HepG2 (cell line): ENCODE measurements at regions of chrX and their contacts with region 1.

Region 1: GRCh38 chrX:120560842-120561633 is at the start of gene CUL4B:
- DNase-seq: peak; percentile 91
- ATAC-seq: peak; percentile 81
- H3K4me3 ChIP-seq: peak within 1 kb of the TSS; percentile 74 to 84 (median 81)
- H3K27ac ChIP-seq: peak within 1 kb of the TSS; percentile 98
- H3K4me1 ChIP-seq: peaks cover 48% of the 10 kb centered on the region
- H3K27me3 ChIP-seq: no peaks in the 10 kb centered on the region
- CTCF ChIP-seq: no peak
- EP300 ChIP-seq: peak in 1 of 2 experiments; percentile 29; a peak in 1 of 4 replicates
- POLR2A ChIP-seq: peak; percentile 45 to 55; a peak in 3 of 4 replicates
- RAD21 ChIP-seq: no peak
- total RNA-seq, gene CUL4B: 28.5 and 50.0 TPM in 2 replicates

Region 2: DNA sequence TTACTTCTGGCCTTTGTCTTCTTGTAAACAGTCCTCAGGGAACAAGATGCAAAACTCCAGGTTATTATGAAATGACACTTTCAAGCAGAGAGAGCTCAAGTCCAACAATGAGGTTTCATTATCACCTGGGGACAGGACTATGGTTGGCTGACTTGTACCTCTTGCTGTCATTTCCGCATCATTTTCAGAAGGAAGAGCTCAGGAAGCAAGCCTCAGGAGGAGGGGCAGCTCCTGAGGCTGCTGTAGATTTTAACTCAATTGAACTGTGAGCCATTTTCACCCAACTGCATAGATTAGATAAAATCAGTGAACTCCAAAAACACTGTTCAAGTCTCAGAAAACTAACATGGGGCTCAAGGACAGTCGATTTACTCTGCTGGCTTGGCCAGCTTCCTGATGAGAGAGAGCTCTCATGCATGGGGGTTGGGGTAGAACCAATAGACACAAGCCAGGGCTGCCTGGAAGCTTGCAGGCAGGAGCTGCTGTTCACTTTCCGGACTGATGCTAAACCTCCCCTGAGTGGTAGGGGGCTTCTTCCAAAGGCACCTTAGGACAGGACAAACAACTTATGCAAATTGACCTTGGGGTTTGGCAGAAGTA is 273.4 kb before region 1 on chrX:
- CTCF ChIA-PET with region 1: no interaction called
- POLR2A ChIA-PET with region 1: no interaction called
- in situ Hi-C with region 1: no loop called
- intact Hi-C with region 1: no loop called
- DNase-seq: peak; percentile 53
- ATAC-seq: peak; percentile 82
- H3K4me3 ChIP-seq: peak overlapping the region in 1 of 3 experiments; percentile 23; a peak in 2 of 6 replicates
- H3K27ac ChIP-seq: peak overlapping the region; percentile 94
- H3K4me1 ChIP-seq: peaks cover 35% of the 10 kb centered on the region
- H3K27me3 ChIP-seq: 0 out of 5 replicates have a peak, but pooled peaks cover 0 to 1% of the 10 kb centered on the region in 2 experiments
- CTCF ChIP-seq: no peak
- EP300 ChIP-seq: no peak; a peak in 1 of 4 replicates
- POLR2A ChIP-seq: no peak
- RAD21 ChIP-seq: no peak

Region 3: GRCh38 chrX:120468825-120469525 is 92.1 kb before region 1 on chrX and contains the start of gene LAMP2:
- CTCF ChIA-PET with region 1: no interaction called
- POLR2A ChIA-PET with region 1: interaction called, 10 read pairs
- in situ Hi-C with region 1: no loop called
- intact Hi-C with region 1: no loop called
- DNase-seq: peak; percentile 86
- ATAC-seq: peak; percentile 94
- H3K4me3 ChIP-seq: peak within 1 kb of the TSS; percentile 80 to 89 (median 81)
- H3K27ac ChIP-seq: peak within 1 kb of the TSS; percentile 90
- H3K4me1 ChIP-seq: peaks cover 33% of the 10 kb centered on the region
- H3K27me3 ChIP-seq: no peaks in the 10 kb centered on the region
- CTCF ChIP-seq: no peak
- EP300 ChIP-seq: no peak
- POLR2A ChIP-seq: peak; percentile 87 to 97
- RAD21 ChIP-seq: no peak
- total RNA-seq, gene LAMP2: 63.0 and 127 TPM in 2 replicates

Region 4: GRCh38 chrX:120514236-120514635 is 46.8 kb before region 1 on chrX:
- CTCF ChIA-PET with region 1: no interaction called
- POLR2A ChIA-PET with region 1: interaction called, 9 read pairs
- in situ Hi-C with region 1: no loop called
- intact Hi-C with region 1: loop called (anchors 5 kb)
- DNase-seq: peak; percentile 32
- ATAC-seq: peak; percentile 86
- H3K4me3 ChIP-seq: no peak overlapping the region
- H3K27ac ChIP-seq: no peak overlapping the region
- H3K4me1 ChIP-seq: peaks cover 37% of the 10 kb centered on the region
- H3K27me3 ChIP-seq: no peaks in the 10 kb centered on the region
- CTCF ChIP-seq: peak; percentile 60
- EP300 ChIP-seq: no peak
- POLR2A ChIP-seq: no peak
- RAD21 ChIP-seq: no peak

Region 5: DNA sequence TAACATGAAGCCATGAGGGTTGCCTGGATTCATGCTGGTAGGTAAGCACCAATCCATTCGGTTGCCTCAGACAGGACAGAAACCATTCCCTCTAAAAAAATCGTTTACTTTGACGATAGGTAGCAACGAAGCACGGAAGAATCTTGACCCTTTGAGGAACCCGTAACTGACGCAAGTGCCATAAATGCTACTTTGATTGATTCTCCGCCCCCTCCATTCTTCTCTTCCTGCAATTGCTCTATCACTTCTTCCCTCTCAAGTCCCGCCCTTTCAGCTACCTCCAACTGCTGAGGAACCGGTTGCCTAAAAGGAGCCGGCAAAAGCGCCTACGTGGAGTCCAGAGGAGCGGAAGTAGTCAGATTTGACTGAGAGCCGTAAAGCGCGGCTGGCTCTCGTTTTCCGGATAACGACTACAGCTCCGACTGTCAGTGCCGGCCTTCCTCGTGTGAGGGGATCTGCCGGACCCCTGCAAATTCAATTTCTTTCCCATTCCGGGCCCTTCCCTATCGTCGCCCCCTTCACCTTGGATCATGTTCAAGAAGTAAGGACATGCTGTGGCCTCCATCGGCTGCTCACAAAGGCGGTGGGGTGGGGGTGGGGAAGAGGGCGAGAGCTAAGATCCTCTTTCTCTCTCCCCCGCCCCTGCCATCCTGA is 42.8 kb after region 1 on chrX and contains the start of gene MCTS1:
- CTCF ChIA-PET with region 1: no interaction called
- POLR2A ChIA-PET with region 1: interaction called, 42 read pairs
- in situ Hi-C with region 1: no loop called
- intact Hi-C with region 1: loop called (anchors 1 kb)
- DNase-seq: peak; percentile 89
- ATAC-seq: peak; percentile 94
- H3K4me3 ChIP-seq: peak within 1 kb of the TSS; percentile 68 to 73 (median 72)
- H3K27ac ChIP-seq: peak within 1 kb of the TSS; percentile 89
- H3K4me1 ChIP-seq: peaks cover 22% of the 10 kb centered on the region; the same call in 1 of the 2 replicates
- H3K27me3 ChIP-seq: no peaks in the 10 kb centered on the region; a peak in 1 of 5 replicates
- CTCF ChIP-seq: no peak
- EP300 ChIP-seq: peak in 1 of 2 experiments; percentile 8; a peak in 1 of 4 replicates
- POLR2A ChIP-seq: peak in 1 of 2 experiments; percentile 42; a peak in 3 of 4 replicates
- RAD21 ChIP-seq: no peak
- total RNA-seq, gene MCTS1: 59.0 and 81.1 TPM in 2 replicates

Region 6: GRCh38 chrX:120755066-120755846 is 194.2 kb after region 1 on chrX:
- CTCF ChIA-PET with region 1: no interaction called
- POLR2A ChIA-PET with region 1: interaction called, 18 read pairs
- in situ Hi-C with region 1: no loop called
- intact Hi-C with region 1: no loop called
- DNase-seq: peak; percentile 82
- ATAC-seq: peak; percentile 78
- H3K4me3 ChIP-seq: no peak overlapping the region
- H3K27ac ChIP-seq: peak overlapping the region; percentile 84
- H3K4me1 ChIP-seq: peaks cover 59% of the 10 kb centered on the region
- H3K27me3 ChIP-seq: no peaks in the 10 kb centered on the region
- CTCF ChIP-seq: no peak
- EP300 ChIP-seq: peak in 1 of 2 experiments; percentile 82; a peak in 2 of 4 replicates
- POLR2A ChIP-seq: no peak
- RAD21 ChIP-seq: no peak

Region 7: DNA sequence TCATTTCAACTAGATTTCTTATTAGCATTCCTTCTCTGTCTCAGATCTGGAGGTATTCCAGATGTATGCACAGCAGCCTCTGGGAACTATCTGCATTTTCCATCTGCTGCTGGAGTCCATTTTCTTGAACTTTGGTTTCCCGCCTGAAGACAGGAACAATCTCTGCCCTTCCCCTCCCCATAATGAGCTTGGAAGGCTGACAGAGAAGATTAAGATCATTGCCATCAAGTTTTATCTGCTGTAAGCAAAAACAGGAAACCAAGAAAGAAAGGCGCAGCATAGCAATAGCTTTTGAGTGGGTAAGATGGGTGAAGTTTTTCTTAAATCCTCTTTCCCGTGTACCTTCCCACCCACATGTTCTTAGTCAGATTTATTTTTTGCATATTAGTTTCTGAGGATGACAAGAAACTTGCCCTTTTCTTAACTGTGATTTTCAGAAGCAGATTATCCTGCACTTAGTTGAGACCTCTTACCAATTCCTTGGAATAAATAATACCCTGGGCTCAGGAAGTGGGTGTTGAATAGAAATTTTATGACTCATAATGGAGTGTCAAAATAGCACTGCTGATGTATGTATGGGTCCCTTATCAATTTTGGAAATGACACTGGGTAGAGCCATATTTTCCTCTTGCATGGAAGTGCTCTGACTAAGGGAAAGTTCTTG is 236.3 kb after region 1 on chrX:
- CTCF ChIA-PET with region 1: no interaction called
- POLR2A ChIA-PET with region 1: no interaction called
- in situ Hi-C with region 1: no loop called
- intact Hi-C with region 1: no loop called
- DNase-seq: no peak
- ATAC-seq: no peak
- H3K4me3 ChIP-seq: no peak overlapping the region
- H3K27ac ChIP-seq: no peak overlapping the region
- H3K4me1 ChIP-seq: no peaks in the 10 kb centered on the region
- H3K27me3 ChIP-seq: no peaks in the 10 kb centered on the region
- CTCF ChIP-seq: no peak
- EP300 ChIP-seq: no peak
- POLR2A ChIP-seq: no peak
- RAD21 ChIP-seq: no peak

Region 8: DNA sequence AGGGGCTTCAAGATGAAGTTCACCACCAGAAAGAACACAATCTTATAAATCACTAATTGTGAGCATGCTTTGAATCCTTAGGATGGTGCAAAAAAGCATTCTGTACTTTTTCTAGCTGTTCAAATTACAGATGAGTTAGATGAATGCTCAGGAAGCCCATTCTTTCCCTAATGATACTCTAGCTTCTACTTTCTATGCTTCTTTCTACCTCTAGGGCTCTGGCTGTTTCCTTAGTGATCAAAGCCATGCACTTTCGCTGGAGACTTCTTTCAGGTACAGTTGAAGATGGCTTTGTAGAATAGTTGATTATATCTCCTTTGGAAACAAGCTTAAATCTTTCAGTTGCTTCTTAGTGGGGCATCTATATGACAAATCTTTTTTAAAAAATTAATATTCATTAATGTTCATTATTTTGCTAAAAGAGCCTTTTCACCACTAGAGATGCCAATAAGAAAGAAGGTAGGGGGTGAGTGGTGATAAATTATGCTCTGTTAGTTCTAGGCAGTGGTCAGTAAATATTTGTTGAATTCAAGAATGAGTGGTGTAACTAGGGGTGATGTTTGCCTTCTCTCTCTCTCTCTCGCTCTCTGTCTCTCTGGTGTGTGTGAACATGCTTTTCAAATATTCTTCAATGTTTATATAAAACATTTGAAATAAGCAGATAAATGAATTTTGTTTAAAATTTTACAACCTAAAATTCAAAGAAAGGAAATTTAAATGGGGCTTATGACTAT is 655.8 kb after region 1 on chrX:
- CTCF ChIA-PET with region 1: no interaction called
- POLR2A ChIA-PET with region 1: no interaction called
- in situ Hi-C with region 1: no loop called
- intact Hi-C with region 1: no loop called
- DNase-seq: no peak
- ATAC-seq: peak; percentile 67; the same call in 2 of the 3 replicates
- H3K4me3 ChIP-seq: no peak overlapping the region
- H3K27ac ChIP-seq: no peak overlapping the region
- H3K4me1 ChIP-seq: peaks cover 25% of the 10 kb centered on the region
- H3K27me3 ChIP-seq: no peaks in the 10 kb centered on the region
- CTCF ChIP-seq: no peak
- EP300 ChIP-seq: no peak
- POLR2A ChIP-seq: no peak
- RAD21 ChIP-seq: no peak